Colonic mucosa (tissue), 4 donors: ENCODE measurements at regions of chr5 and their contacts with region 1.

Region 1: GRCh38 chr5:59188419-59189225 is 605.7 kb downstream of the RAB3C start:
- DNase-seq: peak; percentile 72
- H3K4me3 ChIP-seq: no peak overlapping the region
- H3K27ac ChIP-seq: no peak overlapping the region
- H3K4me1 ChIP-seq: no peaks in the 10 kb centered on the region
- H3K27me3 ChIP-seq: no peaks in the 10 kb centered on the region
- CTCF ChIP-seq: peak; percentile 61

Region 2: DNA sequence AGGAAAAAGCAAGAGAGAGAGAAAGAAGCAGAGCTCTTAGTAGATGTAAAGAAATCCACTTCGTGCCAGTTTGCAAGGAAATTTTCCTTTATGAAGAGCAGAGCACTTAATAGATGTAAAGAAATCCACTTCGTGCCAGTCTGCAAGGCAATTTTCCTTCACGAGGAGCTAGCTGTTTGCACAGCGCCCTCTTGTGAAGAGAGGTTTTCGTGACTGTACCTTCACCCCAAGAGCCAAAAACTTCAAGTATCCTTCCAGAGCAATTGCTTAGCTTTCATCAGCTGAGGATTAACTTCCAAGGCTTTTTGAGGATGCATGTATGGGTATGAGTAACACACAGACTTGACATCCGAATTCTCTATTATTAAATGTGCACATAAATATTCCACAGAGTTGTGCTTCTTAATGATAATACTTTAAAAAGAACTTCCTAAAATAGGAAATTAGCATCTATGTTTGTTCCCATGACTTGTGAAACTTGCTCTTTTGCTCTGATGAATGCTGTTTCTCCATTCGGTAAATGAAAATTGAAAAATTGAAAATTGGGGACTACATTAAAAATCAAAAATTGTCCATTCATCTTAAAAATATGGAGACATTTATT is 179.3 kb after region 1 on chr5:
- intact Hi-C with region 1: loop called (anchors 5 kb)
- DNase-seq: peak; percentile 71
- H3K4me3 ChIP-seq: no peak overlapping the region
- H3K27ac ChIP-seq: no peak overlapping the region
- H3K4me1 ChIP-seq: no peaks in the 10 kb centered on the region
- H3K27me3 ChIP-seq: no peaks in the 10 kb centered on the region
- CTCF ChIP-seq: peak; percentile 58

Region 3: GRCh38 chr5:59380350-59380951 is 191.8 kb after region 1 on chr5:
- intact Hi-C with region 1: loop called (anchors 5 kb)
- DNase-seq: no peak
- H3K4me3 ChIP-seq: no peak overlapping the region
- H3K27ac ChIP-seq: no peak overlapping the region
- H3K4me1 ChIP-seq: no peaks in the 10 kb centered on the region
- H3K27me3 ChIP-seq: no peaks in the 10 kb centered on the region
- CTCF ChIP-seq: peak; percentile 43

Region 4: DNA sequence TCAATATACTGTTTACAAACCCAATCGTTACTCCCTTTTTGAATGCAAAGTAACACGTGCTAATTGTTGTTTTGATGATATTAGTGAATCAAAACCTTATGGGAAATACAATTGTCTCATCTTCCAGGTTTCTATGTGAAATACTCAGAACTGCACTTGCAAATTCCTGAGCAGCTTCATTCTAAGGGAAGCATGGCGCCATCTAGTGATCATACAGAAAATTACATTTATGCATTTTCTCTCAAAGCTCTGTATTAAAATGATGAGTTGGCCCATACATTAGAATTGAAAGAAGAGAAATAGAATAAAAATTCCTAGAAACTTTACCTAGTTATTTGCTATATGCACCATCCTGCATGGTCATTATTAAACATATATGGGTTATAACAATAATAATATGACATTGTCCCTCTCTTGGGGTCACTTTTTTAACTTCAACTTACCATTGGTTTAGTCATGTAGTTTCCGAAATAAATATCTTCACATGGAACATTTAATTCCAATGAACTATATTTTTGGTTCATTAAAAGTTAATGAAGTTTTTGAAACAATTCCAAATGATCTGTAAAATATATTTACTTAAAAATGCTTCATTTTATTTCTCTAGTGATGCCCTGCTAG is 484.9 kb after region 1 on chr5:
- intact Hi-C with region 1: loop called (anchors 10 kb)
- DNase-seq: no peak
- H3K4me3 ChIP-seq: no peak overlapping the region
- H3K27ac ChIP-seq: no peak overlapping the region
- H3K4me1 ChIP-seq: no peaks in the 10 kb centered on the region
- H3K27me3 ChIP-seq: no peaks in the 10 kb centered on the region
- CTCF ChIP-seq: peak; percentile 79

Region 5: DNA sequence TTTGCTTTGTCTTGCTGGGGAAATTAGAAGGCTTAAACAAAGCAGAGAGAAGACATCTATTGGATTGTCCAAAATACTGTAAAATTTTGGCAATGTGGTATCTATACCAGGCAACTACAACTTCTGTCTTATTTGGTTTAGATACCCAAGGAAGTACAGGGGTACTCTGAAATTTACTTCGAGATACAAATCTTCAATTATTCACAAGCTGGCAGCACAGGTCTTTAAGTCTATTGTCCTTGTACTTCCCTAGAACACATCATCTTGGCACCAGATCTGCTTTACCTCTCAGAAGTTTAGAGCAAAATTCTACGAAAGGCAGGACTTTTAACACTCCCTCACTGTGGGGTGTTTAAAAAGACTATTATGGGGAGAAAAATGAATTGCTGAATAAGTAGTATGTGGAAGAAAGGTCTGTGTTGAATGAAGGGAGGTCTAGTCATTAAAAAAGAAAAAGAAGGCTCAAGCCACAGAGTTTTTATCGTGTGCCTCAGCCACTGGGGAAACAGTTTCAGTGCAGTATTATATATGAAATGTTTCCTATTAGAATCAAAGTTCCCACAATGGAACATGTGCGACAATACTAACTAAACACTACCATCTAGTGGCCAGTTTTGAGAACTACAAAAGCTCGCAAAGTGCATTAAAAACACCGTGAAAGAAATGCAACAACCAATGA is 611.2 kb after region 1 on chr5:
- intact Hi-C with region 1: loop called (anchors 10 kb)
- DNase-seq: peak; percentile 38
- H3K4me3 ChIP-seq: no peak overlapping the region
- H3K27ac ChIP-seq: peak overlapping the region; percentile 31
- H3K4me1 ChIP-seq: no peaks in the 10 kb centered on the region
- H3K27me3 ChIP-seq: no peaks in the 10 kb centered on the region
- CTCF ChIP-seq: peak; percentile 84